ENCODE measurements at regions of chr2 and their contacts with region 1.

Region 1: DNA sequence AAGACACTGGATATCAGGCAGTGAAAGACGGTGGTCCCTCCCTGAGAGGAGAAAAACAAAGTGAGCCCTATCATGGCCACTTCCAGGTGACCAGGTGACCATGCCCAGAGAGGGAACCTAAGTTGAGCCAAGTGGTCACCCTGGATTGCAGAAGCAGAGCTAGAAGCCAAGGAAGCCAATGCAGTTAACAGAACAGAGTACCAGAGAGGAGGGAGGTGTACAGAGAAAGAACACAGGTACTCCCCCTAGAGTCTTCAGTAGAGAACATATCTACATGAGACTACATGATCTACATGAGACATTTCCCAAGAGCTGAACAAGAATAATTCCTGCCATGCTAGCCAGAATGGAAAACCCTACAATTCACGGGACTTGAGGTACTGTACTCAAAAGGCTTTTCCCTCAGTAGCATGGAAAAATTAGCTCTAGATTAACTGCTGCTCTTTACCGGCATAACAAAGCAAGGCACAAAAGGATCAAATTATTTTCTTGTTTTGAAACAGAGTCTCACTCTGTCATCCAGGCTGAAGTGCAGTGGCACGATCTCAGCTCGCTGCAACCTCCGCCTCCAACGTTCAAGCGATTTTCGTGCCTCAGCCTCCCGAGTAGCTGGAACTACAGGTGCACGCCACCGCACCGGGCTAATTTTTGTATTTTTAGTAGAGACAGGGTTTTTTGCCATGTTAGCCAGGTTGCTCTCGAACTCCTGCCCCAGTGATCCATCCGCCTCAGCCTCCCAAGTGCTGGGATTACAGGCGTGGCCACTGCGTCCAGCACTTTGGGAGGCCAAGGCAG is 23.5 kb downstream of the ROCK2 start:
- DNase-seq: peak; percentile 27
- H3K4me3 ChIP-seq: no peak overlapping the region
- H3K27ac ChIP-seq: no peak overlapping the region
- H3K4me1 ChIP-seq: peaks cover 21% of the 10 kb centered on the region
- H3K27me3 ChIP-seq: no peaks in the 10 kb centered on the region
- CTCF ChIP-seq: peak; percentile 46

Region 2: DNA sequence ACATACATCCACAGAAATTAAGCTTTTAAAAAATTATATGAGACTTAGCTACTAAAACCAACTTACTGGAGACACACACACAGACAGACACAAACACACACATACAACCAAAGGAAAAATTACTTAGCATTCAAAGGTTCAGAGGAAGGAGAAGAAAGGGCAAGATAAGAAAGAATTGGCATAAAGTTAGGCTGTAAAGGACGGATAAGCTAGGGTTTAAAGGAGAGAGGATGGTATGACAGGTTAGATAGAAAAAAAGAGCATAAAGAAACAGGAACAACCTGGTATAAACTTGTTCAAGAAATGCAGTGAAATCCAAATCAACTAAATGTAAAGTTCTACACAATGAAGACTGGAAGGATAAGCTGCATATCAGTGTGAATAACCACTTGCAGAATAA is 92.2 kb before region 1 on chr2:
- CTCF ChIA-PET with region 1: no interaction called
- POLR2A ChIA-PET with region 1: no interaction called
- intact Hi-C with region 1: no loop called
- DNase-seq: no peak
- H3K4me3 ChIP-seq: no peak overlapping the region
- H3K27ac ChIP-seq: no peak overlapping the region
- H3K4me1 ChIP-seq: no peaks in the 10 kb centered on the region
- H3K27me3 ChIP-seq: no peaks in the 10 kb centered on the region
- CTCF ChIP-seq: no peak

Region 3: GRCh38 chr2:11239666-11240462 is 81.0 kb before region 1 on chr2:
- CTCF ChIA-PET with region 1: no interaction called
- POLR2A ChIA-PET with region 1: no interaction called
- intact Hi-C with region 1: loop called (anchors 5 kb)
- DNase-seq: no peak
- H3K4me3 ChIP-seq: no peak overlapping the region
- H3K27ac ChIP-seq: no peak overlapping the region
- H3K4me1 ChIP-seq: peaks cover 10% of the 10 kb centered on the region
- H3K27me3 ChIP-seq: no peaks in the 10 kb centered on the region
- CTCF ChIP-seq: no peak

Region 4: GRCh38 chr2:11292464-11293255 is 28.2 kb before region 1 on chr2:
- CTCF ChIA-PET with region 1: no interaction called
- POLR2A ChIA-PET with region 1: no interaction called
- intact Hi-C with region 1: no loop called
- DNase-seq: peak; percentile 84
- H3K4me3 ChIP-seq: no peak overlapping the region
- H3K27ac ChIP-seq: peak overlapping the region; percentile 51
- H3K4me1 ChIP-seq: no peaks in the 10 kb centered on the region
- H3K27me3 ChIP-seq: no peaks in the 10 kb centered on the region
- CTCF ChIP-seq: no peak

Measured in A673 (cell line).